ENCODE measurements at regions of chr11 and their contacts with region 1.

Region 1: DNA sequence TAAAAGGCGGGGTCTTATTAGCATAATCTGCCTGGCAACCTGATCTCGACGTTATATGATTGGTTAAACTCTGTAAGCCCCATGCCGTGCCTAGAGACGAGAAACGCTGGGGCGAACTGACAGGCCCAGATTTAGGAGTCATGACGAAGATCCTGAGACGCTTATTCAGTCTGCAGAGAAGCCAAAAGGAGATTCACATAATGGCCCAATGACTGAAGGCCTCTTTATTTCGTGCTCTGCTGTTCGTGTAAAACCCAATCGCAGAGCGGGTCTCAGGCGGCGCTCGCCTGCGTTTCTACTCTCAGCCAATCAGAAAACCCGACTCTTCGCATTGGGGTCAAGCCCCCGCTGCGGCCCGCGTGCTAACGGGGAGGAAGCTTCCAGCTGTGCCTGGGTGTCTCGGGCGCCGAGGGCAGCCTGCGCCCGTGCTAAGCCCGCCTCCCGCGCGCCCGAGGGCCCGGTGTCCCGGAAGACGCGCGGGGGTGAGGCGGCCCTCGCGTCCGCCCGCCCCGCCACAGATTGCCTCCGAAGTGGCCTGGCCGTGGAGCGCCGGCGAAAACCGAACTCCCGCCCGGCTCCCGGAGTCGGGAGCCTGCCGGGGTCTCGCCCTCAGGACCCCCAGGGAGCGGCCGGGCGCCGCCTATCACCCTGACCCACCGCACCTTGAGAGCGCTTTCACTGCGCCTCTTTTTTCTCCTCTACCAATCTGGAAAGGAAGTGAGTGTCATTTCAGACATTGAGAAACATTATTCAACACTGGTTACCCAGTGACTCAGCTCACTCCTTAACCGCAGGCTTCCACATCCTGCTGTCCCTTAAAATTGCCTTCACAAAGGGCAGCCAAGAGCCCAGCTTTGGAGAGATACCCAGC is 446 bp upstream of the PRDM10 start:
- DNase-seq: peak; percentile 92
- H3K4me3 ChIP-seq: peak overlapping the region; percentile 71
- H3K27me3 ChIP-seq: no peaks in the 10 kb centered on the region
- CTCF ChIP-seq: no peak

Region 2: DNA sequence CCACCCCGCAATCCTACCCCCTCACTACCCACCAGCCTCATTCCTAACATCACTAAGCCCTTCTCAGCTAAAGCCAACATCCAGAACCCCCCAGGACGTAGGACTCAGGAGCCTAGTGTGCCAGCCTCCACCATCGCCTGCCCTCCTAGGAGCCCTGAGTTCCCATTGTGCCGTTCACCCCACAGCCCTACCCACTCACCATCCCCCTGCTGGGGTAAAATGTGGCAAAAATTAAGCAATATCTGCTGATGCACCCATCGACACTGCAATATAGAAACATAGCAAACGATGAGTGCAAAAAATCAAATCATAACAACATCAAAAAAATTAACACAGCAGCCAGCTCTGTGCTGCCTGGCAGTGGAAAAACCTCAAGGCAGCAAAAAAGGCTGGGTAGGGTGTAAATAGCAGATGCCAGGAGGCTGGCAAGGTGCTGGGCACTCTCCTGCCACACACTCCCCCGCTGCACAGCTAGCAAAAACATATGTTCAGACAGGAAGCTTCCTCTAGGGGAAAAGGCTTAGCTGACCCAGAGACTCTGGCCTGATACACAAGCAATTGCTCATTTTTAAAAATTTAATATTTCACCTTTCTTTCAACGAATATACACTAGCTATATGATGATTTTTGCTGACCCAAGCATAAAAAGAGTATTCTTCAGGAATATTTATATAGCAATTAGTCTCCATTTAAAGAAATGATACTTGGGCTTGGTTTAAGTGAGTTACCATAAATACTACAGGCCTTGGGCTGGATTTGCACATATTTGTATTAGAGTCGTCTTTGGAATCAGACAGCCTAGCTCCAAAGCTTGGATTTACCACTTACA is 34.3 kb before region 1 on chr11:
- CTCF ChIA-PET with region 1: interaction called, 3 read pairs
- POLR2A ChIA-PET with region 1: interaction called, 10 read pairs
- DNase-seq: no peak
- H3K4me3 ChIP-seq: no peak overlapping the region
- H3K27me3 ChIP-seq: no peaks in the 10 kb centered on the region
- CTCF ChIP-seq: no peak

Region 3: DNA sequence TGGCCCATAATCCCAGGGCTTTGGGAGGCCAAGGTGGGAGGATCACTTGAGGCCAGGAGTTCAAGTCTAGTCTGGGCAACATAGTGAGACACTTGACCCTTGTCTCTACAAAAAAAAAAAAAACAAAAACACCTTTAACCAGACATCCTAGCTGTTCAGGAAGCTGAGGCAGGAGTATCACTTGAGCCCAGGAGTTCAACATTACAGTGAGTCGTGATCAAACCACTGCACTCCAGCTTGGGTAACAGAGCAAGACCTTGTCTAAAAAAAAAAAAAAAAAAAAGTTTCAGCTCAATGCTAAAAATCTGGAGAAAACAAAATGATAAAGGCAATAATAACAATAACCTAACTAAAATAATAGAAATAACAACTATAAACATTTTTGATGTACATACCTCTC is 44.1 kb after region 1 on chr11:
- CTCF ChIA-PET with region 1: interaction called, 3 read pairs
- POLR2A ChIA-PET with region 1: interaction called, 15 read pairs
- DNase-seq: no peak
- H3K4me3 ChIP-seq: no peak overlapping the region
- H3K27me3 ChIP-seq: no peaks in the 10 kb centered on the region
- CTCF ChIP-seq: no peak

Region 4: DNA sequence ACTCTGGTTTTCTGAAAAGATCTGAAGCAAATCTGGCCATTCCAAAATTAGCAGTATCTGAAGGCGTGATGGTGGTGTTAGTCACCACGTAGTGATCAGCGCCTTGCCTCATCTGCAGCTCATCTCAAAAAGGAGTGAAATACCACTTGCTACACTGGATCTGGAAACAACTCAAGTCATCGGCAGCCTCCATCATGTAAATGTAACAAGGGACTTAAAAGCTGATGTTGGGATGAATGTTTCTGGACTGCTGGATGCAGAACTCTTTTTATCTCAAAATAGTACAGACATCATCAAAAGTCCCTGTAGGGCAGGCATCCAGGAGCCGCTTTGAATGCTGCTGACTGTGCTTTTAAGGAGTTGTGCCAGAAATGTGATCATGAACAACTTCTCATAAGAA is 52.5 kb after region 1 on chr11:
- CTCF ChIA-PET with region 1: interaction called, 3 read pairs
- POLR2A ChIA-PET with region 1: interaction called, 17 read pairs
- DNase-seq: no peak
- H3K4me3 ChIP-seq: no peak overlapping the region
- H3K27me3 ChIP-seq: peaks cover 5% of the 10 kb centered on the region; the same call in 1 of the 2 replicates
- CTCF ChIP-seq: no peak

Measured in BJ (cell line).